B cell (primary cell): ENCODE measurements at regions of chrX and their contacts with region 1.

Region 1: DNA sequence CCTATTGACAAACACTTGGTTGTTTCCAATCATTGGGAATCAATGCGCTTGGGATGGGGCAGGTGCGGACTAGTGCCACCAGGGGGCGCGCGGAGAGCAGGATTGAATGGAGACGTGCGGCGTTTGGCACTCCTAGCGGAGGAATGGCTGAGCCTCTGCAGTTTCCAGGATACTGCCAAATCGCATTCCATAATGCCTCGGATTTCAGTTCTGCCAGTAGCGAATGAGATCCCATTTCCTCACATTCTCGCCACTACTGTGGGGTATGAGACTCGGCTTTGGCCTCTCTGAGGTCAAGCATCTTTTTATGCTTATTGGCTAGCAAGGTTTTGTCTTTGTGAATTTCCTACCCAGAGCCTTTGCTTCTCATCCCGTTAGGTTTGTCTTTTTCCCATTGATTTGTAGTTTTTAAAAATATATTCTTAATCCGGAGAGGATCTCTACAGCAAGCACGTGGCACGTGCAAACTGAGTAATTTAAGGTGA is 28.7 kb downstream of the CLDN34 start:
- DNase-seq: peak; percentile 77
- ATAC-seq: peak; percentile 76
- H3K4me3 ChIP-seq: no peak overlapping the region
- H3K4me3 Mint-ChIP-seq: no peak overlapping the region
- H3K27ac ChIP-seq: no peak overlapping the region
- H3K27ac Mint-ChIP-seq: no peak overlapping the region
- H3K4me1 ChIP-seq: peaks cover 0 to 6% of the 10 kb centered on the region in 2 donors
- H3K4me1 Mint-ChIP-seq: peaks cover 11% of the 10 kb centered on the region
- H3K27me3 ChIP-seq: no peaks in the 10 kb centered on the region
- H3K27me3 Mint-ChIP-seq: no peaks in the 10 kb centered on the region
- CTCF ChIP-seq: peak; percentile 91

Region 2: GRCh38 chrX:9873952-9874351 is 121.9 kb before region 1 on chrX:
- CTCF ChIA-PET with region 1: interaction called, 6 read pairs
- POLR2A ChIA-PET with region 1: no interaction called
- intact Hi-C with region 1: loop called (anchors 5 kb)
- DNase-seq: peak; percentile 63
- ATAC-seq: peak; percentile 65
- H3K4me3 ChIP-seq: no peak overlapping the region
- H3K4me3 Mint-ChIP-seq: no peak overlapping the region
- H3K27ac ChIP-seq: no peak overlapping the region
- H3K27ac Mint-ChIP-seq: no peak overlapping the region
- H3K4me1 ChIP-seq: no peaks in the 10 kb centered on the region
- H3K4me1 Mint-ChIP-seq: peaks cover 2% of the 10 kb centered on the region
- H3K27me3 ChIP-seq: peaks cover 0 to 3% (median 0%) of the 10 kb centered on the region in 4 experiments
- H3K27me3 Mint-ChIP-seq: peaks cover 15% of the 10 kb centered on the region
- CTCF ChIP-seq: peak; percentile 61

Region 3: DNA sequence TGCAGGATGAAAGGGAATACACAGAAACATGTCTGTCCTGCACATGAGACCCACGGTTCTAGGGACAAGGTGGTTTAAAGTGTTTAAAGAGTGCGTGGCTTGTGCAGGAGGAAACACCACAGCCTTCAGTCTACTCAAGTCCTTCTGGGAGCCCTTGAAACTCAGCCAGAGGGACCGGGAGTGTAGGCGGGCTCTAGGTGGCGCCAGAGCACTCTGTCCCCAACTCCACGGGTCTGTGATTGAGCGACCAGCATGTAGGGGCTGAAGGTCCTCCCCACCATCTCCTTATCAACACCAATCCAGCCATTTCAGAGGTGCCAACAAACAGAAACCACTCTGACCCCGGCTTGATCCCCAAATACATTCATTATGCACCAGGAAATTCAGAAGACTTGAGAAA is 110.7 kb before region 1 on chrX:
- CTCF ChIA-PET with region 1: interaction called, 5 read pairs
- POLR2A ChIA-PET with region 1: no interaction called
- intact Hi-C with region 1: loop called (anchors 2 kb)
- DNase-seq: peak; percentile 67
- ATAC-seq: peak; percentile 72
- H3K4me3 ChIP-seq: no peak overlapping the region
- H3K4me3 Mint-ChIP-seq: no peak overlapping the region
- H3K27ac ChIP-seq: no peak overlapping the region
- H3K27ac Mint-ChIP-seq: no peak overlapping the region
- H3K4me1 ChIP-seq: peaks cover 0 to 4% of the 10 kb centered on the region in 2 donors
- H3K4me1 Mint-ChIP-seq: peaks cover 2% of the 10 kb centered on the region
- H3K27me3 ChIP-seq: no peaks in the 10 kb centered on the region
- H3K27me3 Mint-ChIP-seq: no peaks in the 10 kb centered on the region
- CTCF ChIP-seq: peak; percentile 56